ENCODE measurements at regions of chr10 and their contacts with region 1.

Region 1: DNA sequence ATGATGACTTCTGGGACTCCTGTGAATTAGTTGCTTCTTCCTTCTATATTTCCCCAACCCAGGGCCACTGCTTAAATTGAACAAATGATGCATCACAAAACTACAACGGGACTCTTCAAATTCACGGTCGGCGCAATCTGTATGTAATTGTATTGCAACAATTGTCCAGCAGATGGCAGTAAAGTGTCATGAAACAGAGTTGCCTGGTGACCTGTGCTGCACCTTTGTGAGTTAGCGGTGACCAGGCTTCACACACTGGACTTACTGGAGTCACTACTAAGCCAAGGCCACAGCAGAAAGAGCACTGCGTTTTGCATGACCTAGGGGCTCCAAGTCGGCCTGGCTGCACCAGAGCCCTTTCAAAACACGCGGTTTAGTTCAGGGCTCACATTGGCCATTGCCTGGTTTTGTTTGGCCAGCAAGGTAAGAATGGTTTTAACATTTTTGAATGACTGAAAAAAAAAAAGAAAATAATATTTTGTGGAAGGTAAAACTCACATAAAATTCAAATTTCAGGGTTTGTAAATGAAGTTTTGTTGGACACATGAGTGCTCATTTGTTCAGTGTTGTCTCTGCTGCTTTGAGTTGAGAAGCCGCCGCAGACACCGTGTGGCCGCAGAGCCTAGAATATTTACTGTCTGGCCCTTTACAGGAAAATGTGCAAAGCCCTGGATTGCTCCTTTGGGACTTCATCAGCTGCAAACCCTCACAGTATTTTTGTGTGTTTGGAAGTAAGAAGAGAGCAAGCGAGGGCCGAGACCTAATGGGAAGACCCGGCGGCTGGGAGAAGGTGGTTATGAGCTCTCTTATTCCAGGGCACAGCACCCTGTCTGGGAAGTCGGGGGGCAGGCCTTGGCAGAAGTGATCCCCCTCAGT is 23.2 kb upstream of the ZNF32 start:
- DNase-seq: no peak
- ATAC-seq: peak; percentile 70 to 74

Region 2: DNA sequence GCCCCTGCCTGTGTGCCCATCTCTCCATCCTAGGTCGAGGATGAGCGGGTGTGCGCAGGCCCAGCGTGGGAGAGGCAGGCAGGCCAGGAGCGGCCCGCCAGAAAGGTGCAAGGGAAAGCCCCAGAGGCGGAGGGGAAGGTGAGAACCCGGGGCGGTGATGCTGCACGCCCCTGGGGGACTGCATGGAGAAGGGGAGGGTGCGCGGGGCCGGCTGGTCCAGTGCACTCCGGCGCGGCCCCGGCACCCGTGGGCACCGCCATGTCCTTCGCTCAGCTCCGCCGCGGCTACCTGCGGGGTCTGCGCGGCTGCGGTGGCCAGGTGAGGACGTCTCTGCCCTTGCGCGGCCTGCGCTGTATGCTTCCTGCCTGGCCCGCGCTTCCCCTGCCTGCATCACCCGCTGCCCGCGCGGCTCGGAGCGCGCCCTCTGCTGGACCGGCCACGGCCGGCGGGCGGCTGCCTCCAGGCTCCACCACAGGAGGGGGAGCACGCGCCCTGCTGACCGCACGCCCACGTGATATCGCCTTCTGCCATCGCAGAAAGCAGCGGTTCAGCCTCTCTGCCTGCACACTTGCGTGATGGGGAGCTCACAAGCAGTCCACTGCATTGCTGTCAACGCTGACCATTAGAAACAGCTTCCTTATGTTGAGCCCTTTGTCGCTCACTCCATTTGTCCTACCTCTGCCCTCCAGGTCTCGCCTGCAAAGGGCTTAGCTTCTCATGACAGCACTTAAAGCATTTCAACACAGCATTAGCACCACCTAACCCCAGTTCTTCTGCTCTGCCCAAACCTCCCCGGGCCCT is 639.1 kb after region 1 on chr10:
- intact Hi-C with region 1: loop called in 1 of 2 experiments (anchors 5 kb)
- DNase-seq: peak; percentile 90
- ATAC-seq: peak; percentile 99

Region 3: GRCh38 chr10:44352316-44353127 is 680.6 kb after region 1 on chr10:
- intact Hi-C with region 1: no loop called
- DNase-seq: peak; percentile 59
- ATAC-seq: peak; percentile 87 to 88

Measured in left cardiac atrium (tissue), 4 donors.